Activated naive CD4-positive, alpha-beta T cell treated with anti-CD3 and anti-CD28 coated beads for 36 hours (primary cell): ENCODE measurements at regions of chr10 and their contacts with region 1.

Region 1: DNA sequence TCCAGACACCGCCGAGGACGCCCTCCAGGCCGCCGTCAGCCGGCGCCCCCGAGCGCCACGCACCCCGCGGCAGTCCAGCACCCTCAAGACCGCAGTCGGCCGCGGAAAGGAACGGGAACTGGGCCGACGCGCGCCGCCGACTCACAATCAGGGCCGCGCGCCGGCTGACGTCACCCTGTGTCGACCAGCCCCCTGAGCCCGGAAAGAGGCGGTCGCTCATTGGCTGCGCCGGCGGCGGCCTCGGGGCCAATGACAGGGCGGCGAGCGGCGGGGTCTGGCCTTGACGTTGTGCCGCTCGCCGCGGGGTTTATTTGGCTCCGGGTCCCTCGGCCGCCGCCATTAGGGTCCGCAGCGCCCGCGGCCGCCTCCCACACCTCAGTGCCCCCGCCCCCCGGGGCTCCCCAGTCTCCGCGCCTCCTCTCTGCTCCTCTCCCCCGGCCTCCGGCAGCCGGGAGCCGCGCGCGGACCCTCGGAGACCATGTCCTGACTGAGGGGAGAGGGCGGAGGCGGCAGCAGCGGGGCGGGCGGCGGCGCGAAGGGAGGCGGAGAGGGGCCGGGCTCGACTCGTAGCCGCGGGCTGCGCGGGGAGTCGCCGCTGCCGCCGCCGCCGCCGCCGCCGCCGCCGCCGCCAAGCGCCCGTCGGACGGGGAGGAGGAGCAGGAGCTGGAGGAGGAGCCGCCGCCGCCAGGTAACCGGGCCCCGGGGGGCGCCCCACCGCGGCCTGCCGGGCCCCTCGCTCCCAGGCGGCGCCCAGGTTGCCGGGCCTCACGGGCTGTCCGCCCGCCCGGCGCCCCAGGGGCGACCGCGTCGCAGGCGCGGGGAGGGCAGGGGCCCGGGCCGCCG is 25.1 kb upstream of the ZRANB1 start:
- DNase-seq: peak; percentile 97
- H3K4me3 Mint-ChIP-seq: peak overlapping the region; percentile 83
- H3K27ac Mint-ChIP-seq: peak overlapping the region; percentile 85
- H3K4me1 Mint-ChIP-seq: peaks cover 36% of the 10 kb centered on the region
- H3K27me3 Mint-ChIP-seq: no peaks in the 10 kb centered on the region

Region 2: DNA sequence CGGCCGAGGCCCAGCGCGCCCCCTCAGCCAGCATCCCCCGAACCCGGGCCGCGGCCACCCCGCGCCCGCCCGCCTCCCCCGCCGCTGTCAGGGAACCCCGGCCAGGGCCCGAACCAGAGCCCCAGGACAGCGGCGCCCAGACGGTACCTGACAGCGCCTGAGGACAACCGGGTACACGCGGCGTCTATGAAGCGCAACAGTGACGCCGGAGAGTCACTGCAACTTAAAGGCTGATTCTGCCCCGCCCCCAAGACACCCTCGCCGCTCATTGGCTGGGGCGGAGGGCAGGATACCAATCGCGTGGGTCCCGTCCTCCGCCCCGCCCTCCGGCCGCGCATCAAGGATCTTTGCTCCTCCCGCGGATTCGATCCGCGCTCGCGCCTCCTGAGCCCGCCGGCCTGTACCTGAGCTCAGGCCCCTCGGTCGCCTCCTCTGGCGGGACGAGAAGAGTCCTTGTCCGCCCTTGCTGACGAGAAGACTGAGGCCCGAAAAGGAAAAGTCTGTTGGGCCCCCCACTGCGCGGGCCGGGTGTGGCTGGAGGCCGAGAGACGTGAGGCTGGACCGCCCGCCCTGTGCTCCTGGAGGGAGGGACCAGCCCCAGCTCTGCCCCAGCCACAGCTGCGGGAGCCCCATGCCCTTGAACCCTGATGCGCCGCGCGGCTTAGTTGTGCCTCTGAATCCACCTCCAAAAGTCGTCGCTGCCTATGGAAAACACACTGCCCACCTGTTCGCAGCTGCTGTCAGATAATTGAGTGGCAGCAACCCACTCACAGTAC is 497.9 kb before region 1 on chr10 and contains the start of gene OAT:
- CTCF ChIA-PET with region 1: interaction called, 3 read pairs
- intact Hi-C with region 1: loop called (anchors 1 kb)
- DNase-seq: peak; percentile 98
- H3K4me3 Mint-ChIP-seq: peak within 1 kb of the TSS; percentile 76
- H3K27ac Mint-ChIP-seq: no peak within 1 kb of the TSS
- H3K4me1 Mint-ChIP-seq: peaks cover 25% of the 10 kb centered on the region
- H3K27me3 Mint-ChIP-seq: no peaks in the 10 kb centered on the region
- total RNA-seq, gene OAT: 37.4 to 41.6 TPM

Region 3: GRCh38 chr10:124935946-124936345 is 19.1 kb after region 1 on chr10:
- CTCF ChIA-PET with region 1: no interaction called
- intact Hi-C with region 1: loop called (anchors 2 kb)
- DNase-seq: peak; percentile 36
- H3K4me3 Mint-ChIP-seq: no peak overlapping the region
- H3K27ac Mint-ChIP-seq: no peak overlapping the region
- H3K4me1 Mint-ChIP-seq: peaks cover 41% of the 10 kb centered on the region
- H3K27me3 Mint-ChIP-seq: no peaks in the 10 kb centered on the region

Region 4: DNA sequence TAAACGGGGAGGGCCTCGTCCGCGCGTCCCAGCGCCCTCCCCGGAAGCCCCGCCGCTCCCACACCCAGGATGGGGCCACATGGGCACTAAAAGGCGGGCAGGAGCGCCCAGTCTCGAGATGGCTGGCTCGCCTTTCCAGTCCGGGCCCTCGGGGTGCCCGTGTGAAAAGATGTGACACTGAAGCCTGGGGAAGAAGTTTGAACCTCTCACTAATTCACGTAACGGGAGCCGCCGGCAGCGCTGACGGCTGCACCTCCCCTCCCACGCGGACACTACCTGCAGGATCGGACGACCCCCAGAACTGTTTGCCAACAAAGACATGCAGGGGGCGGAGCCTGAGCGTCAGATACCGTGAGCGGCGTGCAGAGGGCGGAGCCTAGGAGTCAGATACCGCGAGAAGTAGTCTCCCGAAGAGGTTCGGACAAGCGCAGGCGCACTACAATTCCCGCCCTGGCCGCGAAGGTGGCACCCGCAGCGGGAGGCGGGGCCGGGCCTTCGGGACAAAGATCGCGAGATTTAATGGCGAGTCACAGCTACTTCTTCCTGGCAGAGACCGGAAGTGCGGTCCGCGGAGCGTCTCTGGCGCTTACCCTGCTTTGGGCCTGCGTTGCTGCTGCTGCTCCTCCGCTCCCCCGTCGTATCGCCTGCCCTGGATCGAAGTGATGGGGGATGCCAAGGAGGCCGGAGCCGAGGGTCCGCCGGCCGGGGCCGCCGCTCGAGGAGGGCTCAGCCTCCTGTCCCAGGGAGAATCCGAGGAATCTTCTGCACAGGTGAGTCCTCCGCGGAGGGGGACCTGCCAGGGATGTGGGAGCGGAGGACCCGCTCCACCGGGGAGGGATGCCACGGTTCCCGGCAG is 802.6 kb after region 1 on chr10 and contains the start of gene EDRF1:
- CTCF ChIA-PET with region 1: no interaction called
- intact Hi-C with region 1: loop called (anchors 1 kb)
- DNase-seq: peak; percentile 99
- H3K4me3 Mint-ChIP-seq: peak within 1 kb of the TSS; percentile 88
- H3K27ac Mint-ChIP-seq: peak within 1 kb of the TSS; percentile 98
- H3K4me1 Mint-ChIP-seq: peaks cover 30% of the 10 kb centered on the region
- H3K27me3 Mint-ChIP-seq: no peaks in the 10 kb centered on the region
- total RNA-seq, gene EDRF1: 24.0 to 25.0 TPM

Region 5: GRCh38 chr10:125822878-125823662 is 906.3 kb after region 1 on chr10 and contains the starts of genes BCCIP and UROS:
- CTCF ChIA-PET with region 1: no interaction called
- intact Hi-C with region 1: loop called (anchors 1 kb)
- DNase-seq: peak; percentile 90
- H3K4me3 Mint-ChIP-seq: peak within 1 kb of the TSS; percentile 75
- H3K27ac Mint-ChIP-seq: peak within 1 kb of the TSS; percentile 66
- H3K4me1 Mint-ChIP-seq: peaks cover 28% of the 10 kb centered on the region
- H3K27me3 Mint-ChIP-seq: no peaks in the 10 kb centered on the region
- total RNA-seq, gene BCCIP: 103 to 107 TPM
- total RNA-seq, gene UROS: 30.8 to 32.9 TPM

Region 6: GRCh38 chr10:125840406-125841353 is 923.9 kb after region 1 on chr10:
- CTCF ChIA-PET with region 1: no interaction called
- intact Hi-C with region 1: no loop called
- DNase-seq: no peak
- H3K4me3 Mint-ChIP-seq: no peak overlapping the region
- H3K27ac Mint-ChIP-seq: no peak overlapping the region
- H3K4me1 Mint-ChIP-seq: no peaks in the 10 kb centered on the region
- H3K27me3 Mint-ChIP-seq: no peaks in the 10 kb centered on the region